ENCODE measurements at regions of chr6 and their contacts with region 1.

Region 1: GRCh38 chr6:43516697-43517504 is at the starts of genes POLR1C and YIPF3:
- DNase-seq: peak; percentile 90 to 98 (median 97)
- ATAC-seq: peak; percentile 96
- H3K4me3 ChIP-seq: peak within 1 kb of the TSS; percentile 91 to 98
- H3K4me3 Mint-ChIP-seq: no peak within 1 kb of the TSS
- H3K27ac ChIP-seq: peak within 1 kb of the TSS; percentile 83 to 94
- H3K27ac Mint-ChIP-seq: no peak within 1 kb of the TSS
- H3K4me1 ChIP-seq: peaks cover 34% of the 10 kb centered on the region
- H3K4me1 Mint-ChIP-seq: peaks cover 33% of the 10 kb centered on the region
- H3K27me3 ChIP-seq: no peaks in the 10 kb centered on the region
- H3K27me3 Mint-ChIP-seq: no peaks in the 10 kb centered on the region
- CTCF ChIP-seq: no peak
- total RNA-seq, gene POLR1C: 73.9 to 74.0 TPM
- total RNA-seq, gene YIPF3: 51.0 to 52.5 TPM

Region 2: DNA sequence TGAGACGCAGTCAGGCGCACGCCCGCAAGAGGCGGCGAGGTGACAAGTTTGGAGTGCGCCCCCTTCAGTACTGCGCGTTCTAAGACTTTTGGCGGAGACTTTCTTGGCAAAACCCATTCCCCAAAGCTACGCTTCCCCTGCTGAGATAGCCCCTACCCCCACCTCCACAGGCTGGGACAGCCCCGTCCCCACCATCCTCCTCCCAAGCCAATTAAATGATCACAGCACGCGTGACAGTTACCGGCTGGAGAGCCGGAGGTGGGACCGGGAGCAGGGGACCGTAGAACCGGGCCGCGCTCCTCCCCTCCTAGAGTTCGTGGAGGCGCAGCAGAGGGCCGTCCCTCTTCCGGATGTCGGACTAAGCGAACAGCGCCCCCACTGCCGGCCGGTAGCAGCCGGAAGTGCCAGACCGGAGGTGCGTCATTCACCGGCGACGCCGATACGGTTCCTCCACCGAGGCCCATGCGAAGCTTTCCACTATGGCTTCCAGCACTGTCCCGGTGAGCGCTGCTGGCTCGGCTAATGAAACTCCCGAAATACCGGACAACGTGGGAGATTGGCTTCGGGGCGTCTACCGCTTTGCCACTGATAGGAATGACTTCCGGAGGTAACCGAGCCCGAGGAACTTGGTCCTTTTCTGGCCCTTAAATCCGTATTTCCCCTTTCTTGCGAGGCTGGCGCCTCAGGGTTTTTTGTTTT is 1729.5 kb before region 1 on chr6 and contains the start of gene TOMM6:
- CTCF ChIA-PET with region 1: no interaction called
- POLR2A ChIA-PET with region 1: no interaction called
- intact Hi-C with region 1: loop called in 1 of 2 experiments (anchors 10 kb)
- DNase-seq: peak; percentile 90 to 97 (median 96)
- ATAC-seq: peak; percentile 78
- H3K4me3 ChIP-seq: peak within 1 kb of the TSS; percentile 80 to 96
- H3K4me3 Mint-ChIP-seq: peak within 1 kb of the TSS; percentile 97
- H3K27ac ChIP-seq: peak within 1 kb of the TSS; percentile 89 to 94
- H3K27ac Mint-ChIP-seq: peak within 1 kb of the TSS; percentile 99
- H3K4me1 ChIP-seq: peaks cover 6% of the 10 kb centered on the region
- H3K4me1 Mint-ChIP-seq: peaks cover 15% of the 10 kb centered on the region
- H3K27me3 ChIP-seq: no peaks in the 10 kb centered on the region
- H3K27me3 Mint-ChIP-seq: no peaks in the 10 kb centered on the region
- CTCF ChIP-seq: peak; percentile 78
- total RNA-seq, gene TOMM6: 94.3 to 101 TPM

Region 3: DNA sequence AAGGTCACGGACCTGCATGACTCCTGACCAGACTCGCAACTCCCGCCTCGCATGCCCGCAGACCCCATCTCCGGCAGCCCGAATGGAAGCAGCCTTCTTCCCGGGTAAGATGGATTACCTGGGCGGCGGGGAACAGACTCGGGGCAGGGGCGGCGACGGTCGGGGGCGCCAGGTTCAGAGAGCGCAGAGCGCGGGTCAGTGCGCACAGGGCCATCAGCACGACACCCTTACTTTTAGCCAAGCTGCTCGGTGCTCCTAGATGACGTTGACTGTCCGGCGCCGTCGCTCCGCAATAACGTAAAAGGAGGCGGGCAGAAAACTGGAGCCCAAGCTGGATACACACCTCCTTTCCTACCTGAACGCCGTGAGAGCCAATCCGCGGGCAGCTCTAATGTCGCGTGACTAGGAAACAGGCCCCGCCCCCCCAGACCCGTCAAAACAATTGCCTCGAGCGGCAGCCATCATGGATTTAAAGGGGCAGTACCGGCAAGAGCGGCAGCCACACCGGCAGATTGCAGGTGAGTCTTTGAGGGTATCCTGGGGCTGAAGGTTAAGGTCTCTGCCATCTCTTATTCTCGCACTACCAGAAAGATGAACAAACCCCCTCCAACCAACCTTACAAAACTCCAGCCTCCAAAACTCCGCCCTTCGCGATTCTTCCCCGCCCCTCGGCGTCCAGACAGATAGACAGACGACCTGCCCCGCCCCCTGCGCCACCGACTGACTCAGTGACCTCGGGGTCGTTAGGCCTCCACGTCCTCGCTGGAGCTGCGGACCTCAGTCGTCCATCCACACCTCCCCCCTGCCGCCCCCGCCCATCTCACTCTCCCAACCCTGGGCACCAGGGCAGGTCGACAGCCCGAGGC is 457.5 kb before region 1 on chr6 and contains the starts of genes KLC4 and MRPL2:
- CTCF ChIA-PET with region 1: no interaction called
- POLR2A ChIA-PET with region 1: no interaction called
- intact Hi-C with region 1: loop called (anchors 2 to 5 kb)
- DNase-seq: peak; percentile 94 to 99 (median 98)
- ATAC-seq: peak; percentile 97
- H3K4me3 ChIP-seq: peak within 1 kb of the TSS; percentile 81 to 96
- H3K4me3 Mint-ChIP-seq: peak within 1 kb of the TSS; percentile 95
- H3K27ac ChIP-seq: peak within 1 kb of the TSS; percentile 84 to 91
- H3K27ac Mint-ChIP-seq: peak within 1 kb of the TSS; percentile 99
- H3K4me1 ChIP-seq: peaks cover 19% of the 10 kb centered on the region
- H3K4me1 Mint-ChIP-seq: peaks cover 44% of the 10 kb centered on the region
- H3K27me3 ChIP-seq: no peaks in the 10 kb centered on the region
- H3K27me3 Mint-ChIP-seq: no peaks in the 10 kb centered on the region
- CTCF ChIP-seq: no peak
- total RNA-seq, gene KLC4: 42.1 to 57.4 TPM
- total RNA-seq, gene MRPL2: 38.9 to 41.6 TPM

Region 4: GRCh38 chr6:43221046-43221972 is 295.6 kb before region 1 on chr6:
- CTCF ChIA-PET with region 1: no interaction called
- POLR2A ChIA-PET with region 1: no interaction called
- intact Hi-C with region 1: no loop called
- DNase-seq: peak in 1 of 9 experiments; percentile 20
- ATAC-seq: no peak
- H3K4me3 ChIP-seq: no peak overlapping the region
- H3K4me3 Mint-ChIP-seq: no peak overlapping the region
- H3K27ac ChIP-seq: no peak overlapping the region
- H3K27ac Mint-ChIP-seq: peak overlapping the region; percentile 83
- H3K4me1 ChIP-seq: peaks cover 32% of the 10 kb centered on the region
- H3K4me1 Mint-ChIP-seq: peaks cover 39% of the 10 kb centered on the region
- H3K27me3 ChIP-seq: no peaks in the 10 kb centered on the region
- H3K27me3 Mint-ChIP-seq: no peaks in the 10 kb centered on the region
- CTCF ChIP-seq: no peak

Region 5: DNA sequence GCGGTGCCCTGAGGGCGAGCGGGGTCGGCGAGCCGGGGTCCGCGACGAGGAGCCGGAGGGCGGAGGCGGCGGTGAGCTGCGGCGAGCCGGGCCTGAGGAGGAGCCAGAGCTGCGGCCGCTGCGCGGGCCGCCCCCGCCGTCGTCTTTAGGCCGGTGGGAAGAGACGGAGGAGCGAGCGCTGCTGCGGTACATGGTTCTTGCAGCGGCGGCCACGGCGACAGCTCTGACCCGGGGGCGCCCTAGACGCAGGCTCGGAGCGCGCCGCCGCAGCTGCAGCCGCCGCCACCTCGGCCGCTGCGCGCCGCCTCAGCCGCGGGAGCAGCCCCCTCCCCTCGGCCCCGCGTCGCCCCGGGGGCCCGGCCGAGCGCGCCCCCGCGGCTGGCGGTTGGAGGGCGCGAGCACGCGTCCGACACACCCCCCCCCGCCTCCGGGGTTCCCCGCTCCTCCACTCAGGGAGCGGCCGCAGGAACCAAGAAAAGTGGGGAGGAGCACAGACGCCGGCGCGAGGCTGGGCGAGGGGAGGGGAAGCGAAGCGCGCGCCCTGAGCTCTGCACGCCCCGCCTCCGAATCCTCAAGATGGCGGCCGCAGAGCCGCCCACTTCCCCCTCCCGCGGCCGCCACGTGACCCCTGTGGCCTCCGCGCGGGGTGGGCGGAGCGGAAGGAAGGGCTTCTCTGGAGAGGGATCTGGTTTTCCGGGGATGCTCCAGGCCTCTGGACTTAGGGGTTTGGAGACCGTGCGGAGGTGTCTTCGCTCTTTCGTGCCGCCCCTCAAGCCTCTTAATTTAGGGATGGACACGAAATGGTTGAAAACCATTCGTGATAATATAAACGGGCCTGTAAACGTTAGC is 147.5 kb before region 1 on chr6 and contains the start of gene ZNF318:
- CTCF ChIA-PET with region 1: no interaction called
- POLR2A ChIA-PET with region 1: interaction called, 3 read pairs
- intact Hi-C with region 1: loop called in 1 of 2 experiments (anchors 1 kb)
- DNase-seq: peak; percentile 85 to 98 (median 93)
- ATAC-seq: peak; percentile 95
- H3K4me3 ChIP-seq: peak within 1 kb of the TSS; percentile 69 to 81
- H3K4me3 Mint-ChIP-seq: peak within 1 kb of the TSS; percentile 89
- H3K27ac ChIP-seq: peak within 1 kb of the TSS; percentile 76 to 87
- H3K27ac Mint-ChIP-seq: peak within 1 kb of the TSS; percentile 96
- H3K4me1 ChIP-seq: peaks cover 33% of the 10 kb centered on the region
- H3K4me1 Mint-ChIP-seq: peaks cover 43% of the 10 kb centered on the region
- H3K27me3 ChIP-seq: no peaks in the 10 kb centered on the region
- H3K27me3 Mint-ChIP-seq: no peaks in the 10 kb centered on the region
- CTCF ChIP-seq: no peak
- total RNA-seq, gene ZNF318: 18.2 TPM

Region 6: GRCh38 chr6:43506667-43507471 is 10.0 kb before region 1 on chr6:
- CTCF ChIA-PET with region 1: interaction called, 50 read pairs
- POLR2A ChIA-PET with region 1: interaction called, 28 read pairs
- intact Hi-C with region 1: no loop called
- DNase-seq: peak; percentile 64 to 89 (median 80)
- ATAC-seq: peak; percentile 74
- H3K4me3 ChIP-seq: no peak overlapping the region
- H3K4me3 Mint-ChIP-seq: no peak overlapping the region
- H3K27ac ChIP-seq: no peak overlapping the region
- H3K27ac Mint-ChIP-seq: peak overlapping the region; percentile 18
- H3K4me1 ChIP-seq: peaks cover 14% of the 10 kb centered on the region
- H3K4me1 Mint-ChIP-seq: peaks cover 14% of the 10 kb centered on the region
- H3K27me3 ChIP-seq: peaks cover 0 to 13% of the 10 kb centered on the region in 2 experiments
- H3K27me3 Mint-ChIP-seq: peaks cover 16% of the 10 kb centered on the region
- CTCF ChIP-seq: peak; percentile 87

Region 7: DNA sequence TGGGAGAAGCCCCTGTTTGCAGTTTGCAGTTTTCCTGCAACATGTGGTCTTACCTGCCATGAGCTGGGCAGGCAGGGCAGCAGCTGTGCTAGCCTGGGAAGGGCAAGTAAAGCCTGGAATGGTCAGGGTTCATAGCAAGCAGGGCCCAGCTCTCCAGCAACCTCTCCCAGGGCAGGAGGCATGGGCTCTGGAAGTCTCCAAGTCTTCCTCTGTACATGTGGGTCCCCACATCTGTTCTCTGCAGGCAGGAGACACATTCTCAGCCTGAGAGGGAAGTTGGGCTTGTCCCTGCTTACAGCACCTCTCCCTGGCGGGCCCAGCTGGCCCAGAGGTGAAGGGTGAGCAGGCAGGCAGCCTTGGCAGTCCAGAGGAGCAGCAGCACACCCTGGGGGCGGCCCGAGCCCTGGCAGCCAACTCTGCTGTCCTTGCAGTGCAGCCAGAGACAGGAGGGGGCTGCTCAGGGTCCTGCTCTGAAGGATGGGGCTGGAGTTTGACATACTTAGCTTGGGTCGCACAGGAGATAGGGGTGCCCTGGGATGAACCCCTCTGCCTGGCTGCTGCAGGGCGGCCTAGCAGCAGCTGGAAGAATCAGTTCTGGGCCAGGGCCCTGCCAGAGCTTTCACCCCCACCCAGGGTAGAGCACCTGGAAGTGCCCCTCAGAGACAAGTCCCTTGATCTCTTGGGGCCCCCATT is 434.3 kb after region 1 on chr6:
- CTCF ChIA-PET with region 1: no interaction called
- POLR2A ChIA-PET with region 1: no interaction called
- intact Hi-C with region 1: no loop called
- DNase-seq: peak in 3 of 9 experiments; percentile 18 to 43 (median 26)
- ATAC-seq: no peak
- H3K4me3 ChIP-seq: no peak overlapping the region
- H3K4me3 Mint-ChIP-seq: no peak overlapping the region
- H3K27ac ChIP-seq: no peak overlapping the region
- H3K27ac Mint-ChIP-seq: no peak overlapping the region
- H3K4me1 ChIP-seq: no peaks in the 10 kb centered on the region
- H3K4me1 Mint-ChIP-seq: no peaks in the 10 kb centered on the region
- H3K27me3 ChIP-seq: no peaks in the 10 kb centered on the region
- H3K27me3 Mint-ChIP-seq: peaks cover 13% of the 10 kb centered on the region
- CTCF ChIP-seq: no peak

Region 8: GRCh38 chr6:44246663-44247337 is 729.9 kb after region 1 on chr6 and contains the start of gene HSP90AB1:
- CTCF ChIA-PET with region 1: no interaction called
- POLR2A ChIA-PET with region 1: no interaction called
- intact Hi-C with region 1: loop called in 1 of 2 experiments (anchors 5 kb)
- DNase-seq: peak; percentile 89 to 99 (median 94)
- ATAC-seq: peak; percentile 79
- H3K4me3 ChIP-seq: peak within 1 kb of the TSS; percentile 96 to 98
- H3K4me3 Mint-ChIP-seq: peak within 1 kb of the TSS; percentile 99
- H3K27ac ChIP-seq: peak within 1 kb of the TSS; percentile 95 to 96
- H3K27ac Mint-ChIP-seq: peak within 1 kb of the TSS; percentile 98
- H3K4me1 ChIP-seq: peaks cover 26% of the 10 kb centered on the region
- H3K4me1 Mint-ChIP-seq: peaks cover 50% of the 10 kb centered on the region
- H3K27me3 ChIP-seq: no peaks in the 10 kb centered on the region
- H3K27me3 Mint-ChIP-seq: no peaks in the 10 kb centered on the region
- CTCF ChIP-seq: no peak
- total RNA-seq, gene HSP90AB1: 561 to 585 TPM

Measured in CD8-positive, alpha-beta T cell (primary cell).